ENCODE measurements at regions of chr12 and their contacts with region 1.

Region 1: GRCh38 chr12:121888478-121889266 is at the start of gene PSMD9:
- DNase-seq: peak; percentile 99
- total RNA-seq, gene PSMD9: 31.2 TPM

Region 2: GRCh38 chr12:121590476-121591143 is 298.1 kb before region 1 on chr12:
- intact Hi-C with region 1: no loop called
- DNase-seq: no peak

Region 3: GRCh38 chr12:121697098-121697698 is 191.5 kb before region 1 on chr12:
- intact Hi-C with region 1: loop called (anchors 5 kb)
- DNase-seq: no peak

Region 4: GRCh38 chr12:121811434-121812319 is 77.0 kb before region 1 on chr12:
- intact Hi-C with region 1: loop called (anchors 1 kb)
- DNase-seq: peak; percentile 89

Region 5: DNA sequence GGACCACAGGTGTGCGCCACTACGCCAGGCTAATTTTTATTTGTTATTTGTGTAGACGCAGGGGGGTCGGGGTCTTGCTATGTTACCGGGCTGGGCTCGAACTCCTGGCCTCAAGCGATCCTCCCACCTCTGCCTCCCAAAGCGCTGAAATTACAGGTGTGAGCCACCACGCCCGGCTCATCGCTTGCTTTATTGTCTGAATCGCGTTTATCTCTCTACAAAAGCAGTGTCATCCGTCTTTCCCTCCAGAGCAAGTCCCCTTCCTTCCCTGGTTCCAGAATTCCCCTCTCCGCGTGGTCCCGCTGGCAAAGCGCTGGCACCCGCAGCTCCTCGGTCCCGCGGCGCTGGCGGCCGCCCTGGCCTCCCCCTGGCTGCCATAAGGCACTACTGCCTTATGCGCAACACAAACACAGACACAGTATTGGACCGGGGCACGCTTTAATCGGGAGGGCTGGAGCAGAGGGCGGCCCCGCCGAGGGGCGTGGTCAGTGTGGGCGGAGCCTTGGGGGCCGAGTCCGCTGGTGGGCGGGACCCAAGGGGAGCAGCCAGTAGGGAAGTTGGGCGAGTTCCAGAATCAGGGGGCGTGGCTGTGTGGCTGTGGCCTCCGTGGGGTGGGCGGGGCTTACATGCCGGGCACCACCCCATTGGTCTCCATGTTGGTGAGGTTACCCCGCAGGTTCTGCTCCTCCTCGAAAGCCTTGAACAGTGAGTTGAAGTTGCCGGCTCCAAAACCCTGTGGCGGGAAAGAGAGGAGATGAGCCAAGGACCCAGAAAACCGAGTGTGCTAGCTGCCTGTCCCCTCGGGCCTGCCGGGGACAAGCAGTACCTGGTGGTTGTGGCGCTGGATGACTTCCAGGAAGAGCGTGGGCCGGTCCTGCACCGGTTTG is 49.3 kb before region 1 on chr12:
- intact Hi-C with region 1: loop called (anchors 2 kb)
- DNase-seq: peak; percentile 100